SK-N-SH (cell line): ENCODE measurements at regions of chr15 and their contacts with region 1.

Region 1: GRCh38 chr15:45205192-45205591 is 17.4 kb upstream of the SHF start:
- DNase-seq: peak; percentile 74
- H3K4me3 ChIP-seq: no peak overlapping the region; a peak in 1 of 4 replicates
- H3K27ac ChIP-seq: no peak overlapping the region
- H3K4me1 ChIP-seq: no peaks in the 10 kb centered on the region; a peak in 1 of 4 replicates
- H3K27me3 ChIP-seq: no peaks in the 10 kb centered on the region
- CTCF ChIP-seq: peak; percentile 90
- EP300 ChIP-seq: no peak
- RAD21 ChIP-seq: peak; percentile 91

Region 2: DNA sequence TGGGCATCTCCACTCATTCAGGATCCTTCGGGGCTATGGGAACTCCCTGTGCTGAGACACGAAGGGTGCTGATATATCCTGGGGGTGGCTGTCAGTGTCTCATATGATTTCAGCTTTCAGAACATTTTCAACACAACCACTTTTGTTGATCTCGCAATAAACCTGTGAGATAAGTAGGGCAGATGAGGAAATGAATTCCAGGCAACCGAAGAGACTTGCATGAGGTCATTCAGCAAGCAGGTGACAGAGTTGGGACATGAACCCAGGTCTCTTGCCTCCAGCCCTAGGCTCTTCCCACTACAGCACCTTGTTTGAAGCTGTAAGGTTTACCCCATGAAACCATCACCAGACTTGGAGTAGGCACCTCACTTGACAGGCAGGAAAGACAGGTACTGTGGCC is 58.8 kb before region 1 on chr15:
- CTCF ChIA-PET with region 1: interaction called, 12 read pairs
- POLR2A ChIA-PET with region 1: no interaction called
- DNase-seq: no peak
- H3K4me3 ChIP-seq: no peak overlapping the region
- H3K27ac ChIP-seq: no peak overlapping the region
- H3K4me1 ChIP-seq: peaks cover 12 to 13% of the 10 kb centered on the region in 2 experiments; a peak in 3 of 4 replicates
- H3K27me3 ChIP-seq: no peaks in the 10 kb centered on the region
- CTCF ChIP-seq: no peak
- EP300 ChIP-seq: no peak
- RAD21 ChIP-seq: no peak

Region 3: GRCh38 chr15:45187894-45188830 is 17.0 kb before region 1 on chr15 and contains the start of gene SHF:
- CTCF ChIA-PET with region 1: interaction called, 10 read pairs
- POLR2A ChIA-PET with region 1: interaction called, 66 read pairs
- DNase-seq: peak; percentile 93
- H3K4me3 ChIP-seq: peak within 1 kb of the TSS; percentile 74 to 78
- H3K27ac ChIP-seq: peak within 1 kb of the TSS in 1 of 2 experiments; percentile 87; a peak in 2 of 4 replicates
- H3K4me1 ChIP-seq: peaks cover 12 to 42% of the 10 kb centered on the region in 2 experiments; a peak in 3 of 4 replicates
- H3K27me3 ChIP-seq: no peaks in the 10 kb centered on the region; the same call in 1 of the 2 replicates
- CTCF ChIP-seq: no peak
- EP300 ChIP-seq: no peak
- RAD21 ChIP-seq: no peak
- polyA plus RNA-seq, gene SHF: 4.4 and 5.5 TPM in 2 replicates

Region 4: DNA sequence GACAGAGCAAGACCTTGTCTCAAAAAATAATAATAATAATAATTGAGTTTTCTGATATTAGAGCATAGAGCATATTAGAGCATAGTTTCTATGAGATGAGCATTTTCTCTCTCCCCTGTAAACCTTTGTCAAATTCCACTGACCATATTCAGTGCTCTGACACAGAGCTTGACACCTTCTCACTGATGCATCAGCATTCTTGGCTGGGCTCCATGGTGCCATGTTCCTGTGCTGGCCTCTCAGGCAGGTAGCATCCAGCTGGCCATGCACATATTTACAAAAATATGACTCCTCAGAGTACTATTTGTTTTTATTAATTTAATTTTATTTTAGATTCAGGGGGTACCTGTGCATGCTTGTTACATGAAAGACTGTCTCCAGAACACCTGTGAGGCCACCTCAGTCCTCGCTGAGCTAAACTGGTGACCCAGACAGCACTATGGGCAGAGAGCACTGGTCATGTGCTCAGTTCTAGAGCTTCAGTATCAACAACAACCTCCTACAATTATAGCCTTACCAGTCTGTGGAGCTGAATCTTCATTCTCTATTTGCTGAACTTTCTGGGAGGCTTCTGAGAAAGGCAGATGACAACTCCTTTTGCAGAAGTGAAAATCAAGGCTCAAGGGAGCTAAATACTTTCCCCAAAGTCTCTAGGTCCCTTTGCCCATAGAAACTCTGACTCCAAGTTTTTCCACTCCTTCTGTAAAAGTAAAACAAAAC is 25.2 kb after region 1 on chr15:
- CTCF ChIA-PET with region 1: interaction called, 27 read pairs
- POLR2A ChIA-PET with region 1: no interaction called
- DNase-seq: no peak
- H3K4me3 ChIP-seq: no peak overlapping the region
- H3K27ac ChIP-seq: no peak overlapping the region
- H3K4me1 ChIP-seq: no peaks in the 10 kb centered on the region; a peak in 1 of 4 replicates
- H3K27me3 ChIP-seq: no peaks in the 10 kb centered on the region
- CTCF ChIP-seq: no peak
- EP300 ChIP-seq: no peak
- RAD21 ChIP-seq: no peak

Region 5: DNA sequence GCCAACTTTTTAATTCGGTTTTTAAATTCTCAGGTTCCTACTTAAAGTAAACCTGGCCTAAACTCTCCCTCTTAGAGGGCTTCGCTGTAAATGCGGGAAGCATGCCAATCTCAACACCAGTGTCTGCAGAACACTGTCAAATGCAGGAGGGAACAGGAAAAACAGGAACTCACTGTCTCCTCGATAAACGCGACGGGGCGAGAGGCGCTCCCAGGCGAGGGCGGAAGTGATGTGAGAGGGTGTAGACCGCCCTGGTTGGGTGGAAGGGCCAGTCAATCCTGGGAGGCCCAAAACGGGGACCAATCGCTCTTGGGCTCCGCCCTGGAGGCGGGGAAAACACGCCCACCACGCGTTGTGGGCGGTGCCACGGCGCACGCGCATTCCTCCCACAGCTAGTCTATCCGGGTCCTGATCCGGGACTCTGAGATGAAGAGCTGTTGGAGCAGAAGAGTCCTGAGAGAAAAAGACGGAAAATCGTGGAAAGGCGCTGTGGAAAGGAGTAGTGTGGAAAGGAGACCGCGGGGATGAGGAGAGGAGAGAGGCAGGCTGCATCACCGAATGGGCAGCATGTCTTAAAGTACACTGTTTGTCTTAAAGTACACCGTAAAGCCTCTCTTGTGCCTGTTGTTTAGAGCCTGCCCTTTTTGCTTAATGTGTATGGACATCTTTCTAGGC is 74.0 kb after region 1 on chr15:
- CTCF ChIA-PET with region 1: interaction called, 13 read pairs
- POLR2A ChIA-PET with region 1: interaction called, 10 read pairs
- DNase-seq: peak; percentile 97
- H3K4me3 ChIP-seq: peak overlapping the region; percentile 53 to 88
- H3K27ac ChIP-seq: peak overlapping the region; percentile 58 to 88; a peak in 3 of 4 replicates
- H3K4me1 ChIP-seq: peaks cover 0 to 12% of the 10 kb centered on the region in 2 experiments; a peak in 2 of 4 replicates
- H3K27me3 ChIP-seq: no peaks in the 10 kb centered on the region
- CTCF ChIP-seq: no peak
- EP300 ChIP-seq: no peak
- RAD21 ChIP-seq: no peak

Region 6: DNA sequence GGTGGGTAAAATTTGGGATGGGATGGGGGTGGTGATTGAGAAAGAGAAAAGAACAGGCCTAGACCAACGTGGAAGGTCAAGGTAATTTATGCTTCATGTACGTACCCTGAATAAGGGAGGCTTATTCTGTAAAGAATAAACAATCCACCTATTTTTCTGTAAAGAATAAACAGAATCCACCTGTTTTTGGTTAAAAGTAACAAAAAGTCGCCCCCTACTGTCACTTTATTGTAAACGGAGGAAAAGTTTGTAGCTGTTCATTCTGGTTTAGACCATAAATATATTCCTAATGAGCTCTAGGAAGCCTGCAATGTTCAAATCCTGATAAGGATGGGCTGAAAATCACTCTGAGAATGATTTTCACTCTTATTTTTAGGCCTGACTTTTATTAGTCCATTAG is 406.1 kb after region 1 on chr15:
- CTCF ChIA-PET with region 1: interaction called, 14 read pairs
- POLR2A ChIA-PET with region 1: no interaction called
- DNase-seq: peak; percentile 32
- H3K4me3 ChIP-seq: no peak overlapping the region
- H3K27ac ChIP-seq: no peak overlapping the region
- H3K4me1 ChIP-seq: no peaks in the 10 kb centered on the region
- H3K27me3 ChIP-seq: no peaks in the 10 kb centered on the region
- CTCF ChIP-seq: peak; percentile 71
- EP300 ChIP-seq: no peak
- RAD21 ChIP-seq: peak; percentile 67

Region 7: DNA sequence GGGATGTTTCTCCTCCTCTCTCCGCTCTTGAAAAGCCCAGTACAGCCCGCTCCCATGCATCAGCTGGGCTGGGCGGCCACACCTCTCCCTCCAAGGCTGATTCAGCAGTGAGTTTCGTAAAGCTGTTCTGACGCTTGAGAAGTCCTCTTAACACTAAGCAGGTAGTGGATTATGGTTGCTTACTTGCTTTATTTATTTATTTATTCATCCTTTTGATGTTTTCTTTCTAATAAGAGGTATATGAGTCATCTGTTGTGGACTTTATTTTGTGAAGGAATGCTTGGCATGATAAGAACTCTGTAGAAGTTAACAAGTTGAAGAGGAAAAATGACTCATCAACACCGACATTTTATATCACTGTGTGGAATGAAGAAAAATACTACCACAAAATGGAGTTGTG is 714.6 kb after region 1 on chr15:
- CTCF ChIA-PET with region 1: no interaction called
- POLR2A ChIA-PET with region 1: no interaction called
- DNase-seq: no peak
- H3K4me3 ChIP-seq: no peak overlapping the region
- H3K27ac ChIP-seq: no peak overlapping the region
- H3K4me1 ChIP-seq: no peaks in the 10 kb centered on the region; a peak in 1 of 4 replicates
- H3K27me3 ChIP-seq: no peaks in the 10 kb centered on the region
- CTCF ChIP-seq: no peak
- EP300 ChIP-seq: no peak
- RAD21 ChIP-seq: no peak